Sciatic nerve (tissue), 2 donors: ENCODE measurements at regions of chr6 and their contacts with region 1.

Region 1: DNA sequence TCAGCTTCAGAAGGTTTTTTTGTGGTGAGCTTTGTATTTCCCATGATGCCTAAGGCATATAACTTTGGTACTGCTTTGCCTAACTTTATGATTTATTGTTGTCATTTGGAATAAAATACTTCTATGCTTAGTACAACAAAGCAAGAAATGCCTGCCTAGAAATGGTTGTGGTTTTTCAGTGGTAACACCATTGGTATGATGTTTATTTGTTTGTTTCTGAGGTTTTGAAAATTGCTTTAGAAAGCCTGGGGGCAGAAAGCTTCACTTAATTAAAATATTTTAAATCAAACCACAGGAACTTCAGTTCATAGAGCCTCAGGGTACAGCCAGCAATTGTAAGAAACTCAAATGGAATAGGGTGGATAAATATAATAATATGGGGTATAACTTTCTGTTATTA is 351.2 kb upstream of the MAP3K7 start:
- DNase-seq: no peak
- ATAC-seq: no peak

Region 2: DNA sequence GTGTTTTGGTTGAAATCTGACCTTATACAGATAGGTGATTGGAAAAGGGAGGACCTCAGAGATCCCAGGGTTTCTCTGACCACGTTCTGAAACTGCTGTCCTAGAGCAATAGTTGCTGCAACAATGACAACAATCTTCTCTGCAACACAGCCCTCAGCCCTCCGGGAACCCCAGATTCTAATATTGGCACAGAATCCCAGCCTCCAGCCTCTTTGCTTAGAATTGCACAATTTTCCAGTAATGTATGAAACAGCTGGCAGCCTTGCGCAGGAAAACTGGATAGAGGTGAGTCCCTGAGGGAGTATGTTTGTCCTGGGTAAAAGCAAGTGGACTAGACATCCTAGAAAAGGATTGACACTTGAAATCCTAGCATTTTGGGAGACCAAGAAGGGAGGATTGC is 1888.0 kb before region 1 on chr6:
- intact Hi-C with region 1: no loop called
- DNase-seq: peak; percentile 77
- ATAC-seq: peak; percentile 97

Region 3: DNA sequence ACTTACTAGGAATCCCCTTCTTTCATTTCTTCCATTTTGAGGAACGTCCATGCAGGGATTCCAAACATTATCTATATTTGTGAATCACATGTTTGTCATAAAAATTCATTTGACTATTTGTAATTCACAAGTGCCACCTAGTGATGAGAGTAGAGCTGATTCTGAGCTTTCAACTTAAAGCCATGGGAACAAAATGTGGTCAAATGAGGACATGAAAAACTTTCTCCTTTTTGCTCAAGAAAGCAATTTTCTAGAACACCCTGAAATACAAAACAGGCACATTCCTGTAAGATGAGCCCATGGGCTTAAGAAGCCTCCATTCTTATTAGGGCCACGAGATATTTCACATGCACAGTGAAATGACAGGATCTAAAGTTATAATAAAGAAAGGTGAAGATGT is 363.5 kb before region 1 on chr6:
- intact Hi-C with region 1: no loop called
- DNase-seq: no peak
- ATAC-seq: no peak

Region 4: DNA sequence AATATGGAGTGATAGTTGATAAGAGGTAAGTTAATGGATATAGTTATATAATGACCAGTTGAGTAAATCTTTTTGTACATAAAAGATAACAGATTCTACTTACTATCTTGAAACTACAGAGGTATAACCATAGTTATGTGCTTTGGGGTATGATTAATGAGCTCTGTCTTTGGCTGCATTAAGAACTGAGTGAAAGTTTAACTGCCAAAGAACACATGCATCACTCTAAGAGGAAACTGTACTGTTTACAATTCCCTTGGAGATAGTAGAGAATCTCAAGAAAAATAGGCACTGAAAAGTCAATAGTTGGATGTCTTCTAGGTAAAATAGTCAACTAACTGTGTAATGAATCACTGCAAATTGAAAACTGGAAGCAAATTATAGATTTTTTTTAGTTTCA is 1351.7 kb after region 1 on chr6:
- intact Hi-C with region 1: loop called (anchors 5 kb)
- DNase-seq: no peak
- ATAC-seq: no peak